HAP-1 (cell line): ENCODE measurements at regions of chr14 and their contacts with region 1.

Region 1: DNA sequence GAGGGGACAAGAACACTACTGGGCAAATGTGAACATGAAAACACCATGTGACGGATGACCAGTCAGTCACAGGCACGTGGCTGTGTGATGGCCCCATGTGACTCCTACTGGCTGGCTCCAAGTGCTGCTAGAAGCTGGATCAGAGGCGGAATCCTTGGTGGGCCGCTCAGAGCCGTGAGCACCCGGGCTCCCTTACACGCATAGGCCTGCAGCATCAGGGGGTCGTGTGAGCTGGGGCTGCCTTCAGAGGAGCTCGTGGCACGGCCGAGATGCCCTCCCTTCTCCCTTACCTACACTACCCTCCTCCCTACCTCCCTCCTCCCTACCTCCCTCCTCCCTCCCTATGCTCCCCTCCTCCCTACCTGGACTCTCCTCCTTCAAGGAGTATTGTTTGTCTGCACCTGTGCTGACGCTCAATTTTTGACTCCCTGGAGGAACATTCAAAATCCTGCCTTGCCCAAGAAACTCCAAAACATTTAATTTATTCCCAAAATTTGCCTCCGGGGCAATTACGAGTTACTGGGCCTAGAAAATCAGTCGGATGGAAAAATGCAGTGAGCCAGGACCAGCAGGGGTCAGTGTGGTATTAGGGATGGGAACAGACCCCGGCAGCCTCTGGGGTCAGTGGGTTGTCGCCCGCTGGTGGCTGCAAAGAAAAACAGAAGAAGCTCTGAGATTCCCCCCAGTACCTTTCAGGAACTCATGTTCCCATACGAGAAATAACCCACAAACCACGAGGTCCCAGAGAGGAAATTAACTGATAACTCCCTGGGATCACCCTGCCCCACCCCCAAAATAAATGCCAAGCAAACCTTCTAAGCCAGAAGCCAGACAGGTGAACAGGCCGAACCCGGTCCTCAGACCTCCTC is 61.2 kb downstream of the C14orf132 start:
- DNase-seq: peak; percentile 61 to 89
- H3K4me3 ChIP-seq: no peak overlapping the region
- H3K4me1 ChIP-seq: no peaks in the 10 kb centered on the region
- H3K27me3 ChIP-seq: no peaks in the 10 kb centered on the region

Region 2: GRCh38 chr14:96274543-96274942 is 174.1 kb after region 1 on chr14:
- in situ Hi-C with region 1: loop called (anchors 5 kb)
- DNase-seq: no peak
- H3K4me3 ChIP-seq: no peak overlapping the region
- H3K4me1 ChIP-seq: no peaks in the 10 kb centered on the region
- H3K27me3 ChIP-seq: no peaks in the 10 kb centered on the region

Region 3: DNA sequence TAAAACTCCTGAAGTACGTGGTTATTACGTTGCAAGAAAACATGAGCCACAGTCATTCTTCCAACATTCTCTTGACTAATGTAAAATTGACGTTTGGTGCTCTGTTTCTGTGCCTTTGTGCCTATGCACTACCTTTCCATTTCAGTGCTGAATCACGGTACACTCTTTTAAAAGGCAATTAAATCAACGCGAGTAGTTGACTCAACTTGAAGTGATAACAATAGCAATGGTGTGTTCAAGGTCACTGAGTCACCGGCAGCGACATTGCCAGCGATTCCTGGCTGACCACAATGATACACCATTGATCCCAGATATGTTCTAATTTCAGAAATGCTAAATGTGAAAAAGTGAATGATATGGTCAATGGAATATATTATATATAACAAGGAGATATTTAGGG is 309.3 kb after region 1 on chr14:
- in situ Hi-C with region 1: loop called (anchors 10 kb)
- DNase-seq: no peak
- H3K4me3 ChIP-seq: no peak overlapping the region
- H3K4me1 ChIP-seq: no peaks in the 10 kb centered on the region
- H3K27me3 ChIP-seq: no peaks in the 10 kb centered on the region